Naive thymus-derived CD4-positive, alpha-beta T cell (primary cell): ENCODE measurements at regions of chr9 and their contacts with region 1.

Region 1: GRCh38 chr9:120892748-120893610 is 16.0 kb upstream of the PHF19 start:
- DNase-seq: peak in 7 of 9 donors; percentile 43 to 77 (median 64)
- ATAC-seq: peak; percentile 65
- H3K4me3 ChIP-seq: peak overlapping the region; percentile 17
- H3K4me3 Mint-ChIP-seq: peak overlapping the region; percentile 54 to 85 (median 80)
- H3K27ac ChIP-seq: peak overlapping the region; percentile 90
- H3K27ac Mint-ChIP-seq: peak overlapping the region; percentile 92 to 100 (median 99)
- H3K4me1 ChIP-seq: peaks cover 64 to 91% of the 10 kb centered on the region in 2 donors
- H3K4me1 Mint-ChIP-seq: peaks cover 40 to 88% (median 74%) of the 10 kb centered on the region in 7 donors
- H3K27me3 ChIP-seq: no peaks in the 10 kb centered on the region
- H3K27me3 Mint-ChIP-seq: no peaks in the 10 kb centered on the region

Region 2: DNA sequence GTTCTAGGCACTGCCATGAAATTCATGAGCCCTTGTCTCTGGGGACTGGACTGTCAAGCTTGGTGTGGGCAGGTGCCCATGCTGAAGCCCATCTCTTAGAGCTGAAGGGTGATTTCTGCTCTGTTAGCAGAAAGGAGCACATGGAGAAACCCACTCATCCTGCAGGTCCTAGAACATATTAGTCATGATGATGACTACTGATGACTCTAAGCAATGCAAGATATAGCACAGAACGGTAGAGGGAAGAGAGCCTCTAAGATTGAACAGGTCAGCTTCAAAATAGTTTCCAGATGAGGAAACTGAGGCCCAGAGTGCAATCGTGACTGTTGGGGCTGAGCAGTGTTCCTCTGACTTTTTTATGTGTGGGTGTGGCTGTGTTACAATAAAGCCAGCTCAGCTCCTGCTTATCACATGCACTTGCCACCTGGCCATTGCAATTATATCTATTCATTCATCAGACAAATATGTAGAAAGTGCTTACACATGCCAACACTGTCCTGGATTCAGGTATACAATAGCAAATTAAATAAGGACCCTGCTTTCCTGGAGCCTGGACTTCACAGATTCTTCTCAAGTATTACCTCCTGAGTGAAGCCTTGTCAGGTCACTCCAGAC is 1383.6 kb before region 1 on chr9:
- CTCF ChIA-PET with region 1: no interaction called
- POLR2A ChIA-PET with region 1: no interaction called
- intact Hi-C with region 1: no loop called
- DNase-seq: no peak
- ATAC-seq: no peak
- H3K4me3 ChIP-seq: no peak overlapping the region
- H3K4me3 Mint-ChIP-seq: no peak overlapping the region
- H3K27ac ChIP-seq: no peak overlapping the region
- H3K27ac Mint-ChIP-seq: no peak overlapping the region
- H3K4me1 ChIP-seq: no peaks in the 10 kb centered on the region
- H3K4me1 Mint-ChIP-seq: no peaks in the 10 kb centered on the region
- H3K27me3 ChIP-seq: no peaks in the 10 kb centered on the region
- H3K27me3 Mint-ChIP-seq: no peaks in the 10 kb centered on the region

Region 3: GRCh38 chr9:120904061-120904977 is 11.3 kb after region 1 on chr9:
- CTCF ChIA-PET with region 1: interaction called, 13 read pairs
- POLR2A ChIA-PET with region 1: interaction called, 2,417 read pairs
- intact Hi-C with region 1: loop called (anchors 1 kb)
- DNase-seq: peak in 8 of 9 donors; percentile 41 to 89 (median 86)
- ATAC-seq: peak; percentile 95
- H3K4me3 ChIP-seq: no peak overlapping the region
- H3K4me3 Mint-ChIP-seq: peak overlapping the region; percentile 38 to 72 (median 56)
- H3K27ac ChIP-seq: peak overlapping the region; percentile 95
- H3K27ac Mint-ChIP-seq: peak overlapping the region; percentile 90 to 100 (median 96)
- H3K4me1 ChIP-seq: peaks cover 64 to 79% of the 10 kb centered on the region in 2 donors
- H3K4me1 Mint-ChIP-seq: peaks cover 48 to 91% (median 86%) of the 10 kb centered on the region in 7 donors
- H3K27me3 ChIP-seq: no peaks in the 10 kb centered on the region
- H3K27me3 Mint-ChIP-seq: no peaks in the 10 kb centered on the region

Region 4: GRCh38 chr9:120916588-120916987 is 23.6 kb after region 1 on chr9:
- CTCF ChIA-PET with region 1: interaction called, 15 read pairs
- POLR2A ChIA-PET with region 1: interaction called, 2,417 read pairs
- intact Hi-C with region 1: no loop called
- DNase-seq: no peak
- ATAC-seq: no peak
- H3K4me3 ChIP-seq: no peak overlapping the region
- H3K4me3 Mint-ChIP-seq: peak overlapping the region; percentile 60 to 79 (median 74)
- H3K27ac ChIP-seq: peak overlapping the region; percentile 59
- H3K27ac Mint-ChIP-seq: peak overlapping the region; percentile 82 to 95 (median 92)
- H3K4me1 ChIP-seq: peaks cover 72% of the 10 kb centered on the region in 2 donors
- H3K4me1 Mint-ChIP-seq: peaks cover 60 to 92% (median 81%) of the 10 kb centered on the region in 7 donors
- H3K27me3 ChIP-seq: no peaks in the 10 kb centered on the region
- H3K27me3 Mint-ChIP-seq: no peaks in the 10 kb centered on the region

Region 5: DNA sequence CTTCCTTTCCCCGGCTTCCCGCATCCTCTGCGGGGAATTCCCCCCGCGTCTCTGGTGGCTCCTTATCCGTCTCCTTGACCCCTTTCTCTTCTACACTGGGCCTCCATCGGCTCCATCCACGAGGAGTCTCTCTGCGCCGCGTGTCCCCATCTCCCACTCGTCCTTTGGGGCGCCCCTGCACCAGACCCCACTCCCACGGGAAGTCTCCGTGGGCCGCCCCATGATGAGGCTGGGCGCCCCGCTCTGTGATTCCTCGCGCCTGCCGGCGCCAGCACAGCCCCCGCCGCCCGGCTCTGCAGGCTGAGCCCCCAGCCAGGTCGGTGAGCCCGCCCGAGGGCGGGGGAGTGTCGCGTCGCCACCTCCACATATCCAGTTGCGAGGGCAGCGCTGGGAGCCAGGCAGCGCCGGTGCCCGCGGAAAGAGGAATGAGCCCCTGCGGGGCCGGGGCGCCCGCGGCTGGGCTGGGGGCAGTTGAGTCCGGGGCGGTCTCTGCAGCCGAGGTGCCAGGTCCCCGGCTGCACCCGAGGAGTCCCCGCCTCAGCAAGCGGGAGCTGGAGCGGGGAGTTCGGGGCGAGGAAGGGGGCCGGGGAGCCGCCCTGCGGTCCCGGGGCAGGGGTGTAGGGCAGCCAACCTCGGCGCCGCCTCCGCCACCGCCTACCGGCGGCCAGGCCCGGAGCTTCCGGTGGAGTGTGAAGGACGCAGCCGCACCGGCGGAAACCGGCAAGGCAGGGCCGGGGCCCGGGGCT is 35.7 kb after region 1 on chr9:
- CTCF ChIA-PET with region 1: interaction called, 29 read pairs
- POLR2A ChIA-PET with region 1: interaction called, 2,417 read pairs
- intact Hi-C with region 1: loop called (anchors 1 kb)
- DNase-seq: peak; percentile 63 to 86 (median 74)
- ATAC-seq: peak; percentile 58
- H3K4me3 ChIP-seq: peak overlapping the region; percentile 79
- H3K4me3 Mint-ChIP-seq: peak overlapping the region; percentile 90 to 100 (median 96)
- H3K27ac ChIP-seq: peak overlapping the region; percentile 97
- H3K27ac Mint-ChIP-seq: peak overlapping the region; percentile 95 to 100 (median 99)
- H3K4me1 ChIP-seq: peaks cover 62 to 84% of the 10 kb centered on the region in 2 donors
- H3K4me1 Mint-ChIP-seq: peaks cover 57 to 95% (median 86%) of the 10 kb centered on the region in 7 donors
- H3K27me3 ChIP-seq: no peaks in the 10 kb centered on the region
- H3K27me3 Mint-ChIP-seq: no peaks in the 10 kb centered on the region

Region 6: DNA sequence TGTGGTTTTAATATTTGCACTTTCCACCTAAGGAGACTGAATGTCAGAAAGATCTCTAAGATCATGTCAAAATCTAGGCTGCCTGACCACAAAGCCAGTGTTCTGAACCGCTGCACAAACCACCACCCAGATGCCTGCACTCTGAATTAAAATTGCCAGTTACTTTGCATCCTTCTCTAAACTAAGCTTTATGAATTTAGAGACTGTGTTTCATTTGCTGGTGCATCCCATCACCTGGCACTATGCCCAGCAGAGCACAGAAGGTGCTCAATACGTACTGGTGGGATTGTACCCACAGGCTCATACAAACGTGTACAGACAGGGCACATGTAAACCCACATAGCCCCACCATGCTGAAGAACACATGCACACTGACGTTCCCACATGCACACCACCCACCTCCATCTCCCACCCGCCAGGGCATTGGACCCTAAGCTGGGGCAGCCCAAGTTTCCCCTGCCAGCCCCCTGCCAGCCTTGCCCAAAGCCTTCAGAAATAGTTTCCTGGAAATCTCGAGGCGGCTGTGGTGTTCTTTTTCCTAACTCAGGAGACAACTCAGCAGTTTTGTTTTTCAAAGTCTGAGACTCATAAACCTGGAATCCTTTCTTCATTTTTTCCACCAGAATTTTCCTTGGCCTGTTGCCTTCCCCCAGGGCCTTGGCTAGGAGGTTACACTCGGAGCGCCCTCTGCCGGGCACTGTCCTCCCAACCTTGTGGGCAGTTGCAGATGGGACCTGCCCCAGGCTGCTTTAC is 43.2 kb after region 1 on chr9:
- CTCF ChIA-PET with region 1: interaction called, 29 read pairs
- POLR2A ChIA-PET with region 1: interaction called, 2,417 read pairs
- intact Hi-C with region 1: loop called (anchors 1 kb)
- DNase-seq: peak; percentile 71 to 89 (median 82)
- ATAC-seq: peak; percentile 85
- H3K4me3 ChIP-seq: peak overlapping the region; percentile 21
- H3K4me3 Mint-ChIP-seq: peak overlapping the region; percentile 33 to 77 (median 62)
- H3K27ac ChIP-seq: peak overlapping the region; percentile 97
- H3K27ac Mint-ChIP-seq: peak overlapping the region; percentile 88 to 100 (median 98)
- H3K4me1 ChIP-seq: peaks cover 61% of the 10 kb centered on the region in 2 donors
- H3K4me1 Mint-ChIP-seq: peaks cover 31 to 71% (median 63%) of the 10 kb centered on the region in 7 donors
- H3K27me3 ChIP-seq: no peaks in the 10 kb centered on the region
- H3K27me3 Mint-ChIP-seq: peaks cover 0 to 2% (median 0%) of the 10 kb centered on the region in 5 donors

Region 7: GRCh38 chr9:120960001-120960400 is 67.0 kb after region 1 on chr9:
- CTCF ChIA-PET with region 1: no interaction called
- POLR2A ChIA-PET with region 1: no interaction called
- intact Hi-C with region 1: no loop called
- DNase-seq: no peak
- ATAC-seq: no peak
- H3K4me3 ChIP-seq: no peak overlapping the region
- H3K4me3 Mint-ChIP-seq: no peak overlapping the region
- H3K27ac ChIP-seq: no peak overlapping the region
- H3K27ac Mint-ChIP-seq: no peak overlapping the region
- H3K4me1 ChIP-seq: no peaks in the 10 kb centered on the region
- H3K4me1 Mint-ChIP-seq: no peaks in the 10 kb centered on the region
- H3K27me3 ChIP-seq: no peaks in the 10 kb centered on the region
- H3K27me3 Mint-ChIP-seq: peaks cover 0 to 37% (median 0%) of the 10 kb centered on the region in 5 donors

Region 8: GRCh38 chr9:121350993-121351561 is 458.1 kb after region 1 on chr9:
- CTCF ChIA-PET with region 1: no interaction called
- POLR2A ChIA-PET with region 1: no interaction called
- intact Hi-C with region 1: loop called in 1 of 2 experiments (anchors 1 kb)
- DNase-seq: no peak
- ATAC-seq: no peak
- H3K4me3 ChIP-seq: no peak overlapping the region
- H3K4me3 Mint-ChIP-seq: no peak overlapping the region
- H3K27ac ChIP-seq: no peak overlapping the region
- H3K27ac Mint-ChIP-seq: no peak overlapping the region
- H3K4me1 ChIP-seq: peaks cover 0 to 46% of the 10 kb centered on the region in 2 donors
- H3K4me1 Mint-ChIP-seq: peaks cover 0 to 51% (median 8%) of the 10 kb centered on the region in 7 donors
- H3K27me3 ChIP-seq: no peaks in the 10 kb centered on the region
- H3K27me3 Mint-ChIP-seq: no peaks in the 10 kb centered on the region